ENCODE measurements at regions of chr1 and their contacts with region 1.

Region 1: DNA sequence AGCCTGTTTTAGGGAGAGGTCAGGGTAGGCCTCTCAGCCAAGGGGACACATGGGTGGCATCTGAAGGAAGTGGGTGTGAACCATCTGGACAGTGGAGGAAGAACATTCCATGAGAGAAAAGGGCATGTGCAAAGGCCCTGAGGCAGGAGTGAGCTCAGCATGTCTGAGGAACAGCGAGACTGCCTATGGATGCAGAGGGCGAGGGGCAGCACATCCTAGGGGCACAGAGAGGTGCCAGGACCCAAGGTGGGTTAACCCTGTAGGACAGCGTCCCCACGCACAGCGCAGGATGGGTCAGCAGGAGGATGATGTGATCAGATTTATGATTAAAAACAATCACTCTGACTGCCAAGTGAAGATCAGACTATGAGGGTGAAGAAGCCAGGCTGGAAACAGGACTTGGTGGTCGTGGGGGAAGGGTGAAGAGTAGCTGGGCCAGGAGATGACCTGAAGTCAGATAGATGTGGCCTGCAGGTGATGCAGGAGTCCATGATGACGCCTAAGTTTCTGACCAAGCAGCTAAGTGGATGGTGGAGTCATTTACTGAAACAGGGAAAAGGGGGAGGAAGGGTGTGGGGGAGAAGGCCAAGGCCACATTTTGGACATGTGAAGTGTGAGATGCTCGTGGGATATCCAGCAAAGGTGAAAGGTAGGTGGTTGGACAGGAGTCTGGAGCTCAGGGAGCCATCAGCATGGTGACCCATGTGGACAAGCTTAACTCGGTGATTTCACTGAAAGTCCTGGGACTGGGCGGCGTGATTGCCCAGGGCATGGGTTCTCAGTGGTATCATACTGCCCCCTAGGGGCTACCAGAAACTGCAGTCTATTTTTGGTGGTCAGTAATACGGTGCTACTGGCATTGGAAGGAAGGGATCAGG is 37.8 kb downstream of the PABPC4 start:
- DNase-seq: peak; percentile 80
- CTCF ChIP-seq: peak; percentile 88

Region 2: GRCh38 chr1:39488793-39489566 is 49.8 kb before region 1 on chr1:
- in situ Hi-C with region 1: loop called (anchors 10 kb)
- DNase-seq: no peak
- CTCF ChIP-seq: no peak

Region 3: GRCh38 chr1:39672551-39672947 is 133.7 kb after region 1 on chr1:
- in situ Hi-C with region 1: no loop called
- DNase-seq: peak; percentile 72
- CTCF ChIP-seq: peak; percentile 75

Region 4: DNA sequence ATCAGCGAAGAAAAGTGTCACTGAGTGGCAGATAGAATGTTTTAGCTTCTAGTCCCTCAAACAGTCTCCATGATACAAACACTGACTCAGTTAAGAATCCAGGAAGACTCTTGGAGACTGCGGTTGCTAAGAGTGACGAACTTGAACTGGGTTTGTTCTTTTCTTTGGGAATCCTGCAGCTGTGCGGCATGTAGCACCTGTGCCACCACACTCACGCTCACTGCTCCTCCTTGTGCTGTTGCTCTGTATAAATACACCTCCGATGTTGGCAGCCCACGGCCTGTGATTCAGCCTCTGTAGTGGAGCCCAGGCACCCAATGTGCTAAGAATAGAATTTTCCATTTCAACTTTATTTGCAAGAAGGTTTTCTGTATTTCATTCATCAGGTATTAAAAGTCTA is 194.3 kb after region 1 on chr1:
- in situ Hi-C with region 1: no loop called
- DNase-seq: no peak
- CTCF ChIP-seq: no peak